Dendritic cell treated with granulocyte-macrophage colony-stimulating factor and Interleukin-4, amounts not matched to agents 40 ng/mL and 50 ng/mL, for 4 days (primary cell): ENCODE measurements at regions of chr17 and their contacts with region 1.

Region 1: GRCh38 chr17:8041249-8041928 is 2.5 kb downstream of the ALOX15B start:
- H3K4me3 Mint-ChIP-seq: no peak overlapping the region
- H3K27ac Mint-ChIP-seq: no peak overlapping the region
- H3K4me1 Mint-ChIP-seq: peaks cover 66% of the 10 kb centered on the region
- H3K27me3 Mint-ChIP-seq: peaks cover 21% of the 10 kb centered on the region

Region 2: GRCh38 chr17:7912927-7913524 is 128.4 kb before region 1 on chr17:
- intact Hi-C with region 1: loop called (anchors 2 kb)
- H3K4me3 Mint-ChIP-seq: no peak overlapping the region
- H3K27ac Mint-ChIP-seq: peak overlapping the region; percentile 39
- H3K4me1 Mint-ChIP-seq: peaks cover 58% of the 10 kb centered on the region
- H3K27me3 Mint-ChIP-seq: no peaks in the 10 kb centered on the region

Region 3: GRCh38 chr17:8016632-8017478 is 24.5 kb before region 1 on chr17:
- intact Hi-C with region 1: loop called (anchors 2 kb)
- H3K4me3 Mint-ChIP-seq: peak overlapping the region; percentile 62
- H3K27ac Mint-ChIP-seq: peak overlapping the region; percentile 57
- H3K4me1 Mint-ChIP-seq: peaks cover 78% of the 10 kb centered on the region
- H3K27me3 Mint-ChIP-seq: peaks cover 38% of the 10 kb centered on the region